ENCODE measurements at regions of chr20 and their contacts with region 1.

Region 1: DNA sequence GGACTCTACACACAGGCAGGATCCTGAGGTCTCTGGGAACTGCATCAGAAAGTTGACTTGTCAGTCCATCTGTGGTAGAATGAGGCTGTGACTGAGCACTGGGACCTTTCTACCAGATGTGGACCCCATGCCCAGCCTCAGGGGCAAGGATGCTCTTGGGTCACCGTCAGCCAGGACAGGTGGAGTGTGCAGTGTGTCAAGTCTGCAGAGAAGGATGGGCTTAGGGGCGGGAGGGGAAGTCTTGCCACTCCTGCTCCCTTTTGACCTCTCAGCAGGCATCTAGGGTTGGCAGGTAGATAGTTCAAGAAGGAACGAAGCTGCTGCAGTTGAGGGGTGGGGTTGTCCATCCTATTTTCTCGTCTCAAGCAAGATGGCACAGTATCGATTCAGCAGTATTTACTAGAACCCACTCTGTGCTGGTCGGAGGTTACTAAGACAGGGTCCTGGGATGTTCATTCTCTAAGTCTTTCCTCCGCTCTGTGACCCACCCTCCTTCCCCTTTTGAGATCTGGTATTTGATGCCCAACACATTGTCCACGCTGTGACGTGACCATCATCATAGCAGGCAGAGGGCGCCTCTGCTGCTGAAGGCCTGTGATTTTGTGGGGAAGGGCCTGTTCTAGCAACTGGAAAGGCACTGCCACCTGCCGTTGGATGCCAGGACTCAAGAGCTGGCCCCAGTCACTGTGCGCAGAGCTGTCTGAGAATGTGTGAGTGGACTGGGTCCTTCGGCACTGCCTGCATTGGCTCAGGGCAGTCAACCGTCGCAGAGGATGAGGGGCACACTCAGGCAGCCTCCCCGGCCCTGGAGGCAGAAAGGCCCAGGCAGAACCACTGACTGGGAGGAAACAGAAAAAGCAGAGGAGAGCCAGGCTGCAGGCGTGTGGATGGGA is 23.2 kb downstream of the RBCK1 start:
- DNase-seq: peak; percentile 92

Region 2: DNA sequence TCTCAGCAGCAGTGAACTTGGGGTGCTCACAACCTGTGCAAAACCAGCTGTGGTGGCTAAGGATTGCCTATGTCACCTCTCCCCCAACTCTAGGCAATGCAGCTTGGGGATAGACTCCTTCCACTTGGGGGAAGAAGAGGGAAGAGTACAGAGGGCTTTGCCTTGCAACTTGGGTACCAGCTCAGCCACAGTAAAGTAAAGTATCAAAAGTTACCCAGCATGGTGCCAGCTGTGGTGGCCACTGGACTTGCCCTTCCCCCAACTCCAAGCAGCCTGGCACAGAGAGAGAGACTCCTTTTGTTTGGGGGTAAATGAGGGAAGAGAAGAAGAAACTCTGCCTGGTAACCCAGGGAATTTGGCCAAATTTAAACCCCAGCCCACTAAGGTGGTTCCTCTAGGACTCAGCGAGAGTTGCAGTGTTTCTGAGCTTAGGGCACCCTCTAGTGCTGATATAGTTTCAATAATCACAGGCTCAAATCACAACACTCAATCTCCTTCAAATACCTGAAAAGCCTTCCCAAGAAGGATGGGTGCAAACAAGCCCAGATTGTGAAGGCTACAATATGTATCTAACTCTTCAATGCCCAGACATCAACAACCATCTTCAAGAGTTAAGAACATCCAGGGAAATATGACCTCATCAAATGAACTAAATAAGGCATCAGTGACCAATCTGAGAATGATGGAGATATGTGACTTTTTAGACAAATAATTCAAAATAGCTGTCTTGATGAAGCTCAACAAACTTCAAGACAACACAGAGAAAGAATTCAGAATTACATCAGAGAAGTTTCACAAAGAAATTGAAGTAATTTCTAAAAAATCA is 211.8 kb before region 1 on chr20:
- in situ Hi-C with region 1: no loop called
- DNase-seq: peak; percentile 37

Region 3: DNA sequence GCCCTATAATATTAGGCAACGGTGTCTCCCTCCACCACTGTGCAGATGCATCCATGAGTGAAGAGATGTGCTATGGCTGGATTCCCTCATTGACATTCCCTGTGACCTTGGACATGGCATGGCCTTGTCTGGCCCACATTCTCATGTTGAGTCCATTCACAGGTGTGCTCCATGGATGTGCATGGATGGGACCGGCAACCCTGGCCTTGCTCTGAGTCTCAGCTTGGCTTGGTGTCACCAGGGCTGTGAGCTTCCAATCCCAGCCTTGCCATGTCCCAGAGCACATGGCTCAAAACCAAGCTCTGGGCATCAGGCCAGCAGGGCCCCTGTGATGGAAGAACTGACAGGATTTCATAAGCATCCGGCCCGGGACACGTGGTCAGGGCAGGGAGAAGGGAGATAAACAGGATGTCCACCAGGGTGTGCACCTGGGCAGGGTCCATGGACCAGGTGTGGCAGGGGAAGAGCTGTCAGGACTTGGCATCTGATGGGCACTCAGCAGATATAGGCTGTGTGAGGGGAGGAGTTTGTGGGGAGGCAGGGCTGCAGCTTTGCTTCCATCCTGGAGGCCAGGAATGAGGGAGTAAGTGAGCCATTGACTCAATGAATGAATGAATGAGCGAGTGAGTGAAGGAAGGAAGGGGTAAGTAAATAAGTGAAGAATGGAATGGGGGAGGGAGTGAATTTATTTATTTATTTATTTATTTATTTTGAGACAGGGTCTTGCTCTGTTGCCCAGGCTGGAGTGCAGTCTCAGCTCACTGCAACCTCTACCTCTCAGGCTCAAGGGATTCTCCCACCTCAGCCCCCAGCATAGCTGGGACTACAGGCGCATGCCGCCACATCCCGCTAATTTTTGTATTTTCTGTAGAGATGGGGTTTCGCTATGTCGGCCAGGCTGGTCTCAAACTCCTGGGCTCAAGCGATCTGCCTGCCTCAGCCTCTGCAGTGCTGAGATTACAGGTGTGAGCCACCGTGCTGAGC is 68.7 kb before region 1 on chr20:
- in situ Hi-C with region 1: loop called (anchors 5 kb)
- DNase-seq: peak; percentile 89

Region 4: DNA sequence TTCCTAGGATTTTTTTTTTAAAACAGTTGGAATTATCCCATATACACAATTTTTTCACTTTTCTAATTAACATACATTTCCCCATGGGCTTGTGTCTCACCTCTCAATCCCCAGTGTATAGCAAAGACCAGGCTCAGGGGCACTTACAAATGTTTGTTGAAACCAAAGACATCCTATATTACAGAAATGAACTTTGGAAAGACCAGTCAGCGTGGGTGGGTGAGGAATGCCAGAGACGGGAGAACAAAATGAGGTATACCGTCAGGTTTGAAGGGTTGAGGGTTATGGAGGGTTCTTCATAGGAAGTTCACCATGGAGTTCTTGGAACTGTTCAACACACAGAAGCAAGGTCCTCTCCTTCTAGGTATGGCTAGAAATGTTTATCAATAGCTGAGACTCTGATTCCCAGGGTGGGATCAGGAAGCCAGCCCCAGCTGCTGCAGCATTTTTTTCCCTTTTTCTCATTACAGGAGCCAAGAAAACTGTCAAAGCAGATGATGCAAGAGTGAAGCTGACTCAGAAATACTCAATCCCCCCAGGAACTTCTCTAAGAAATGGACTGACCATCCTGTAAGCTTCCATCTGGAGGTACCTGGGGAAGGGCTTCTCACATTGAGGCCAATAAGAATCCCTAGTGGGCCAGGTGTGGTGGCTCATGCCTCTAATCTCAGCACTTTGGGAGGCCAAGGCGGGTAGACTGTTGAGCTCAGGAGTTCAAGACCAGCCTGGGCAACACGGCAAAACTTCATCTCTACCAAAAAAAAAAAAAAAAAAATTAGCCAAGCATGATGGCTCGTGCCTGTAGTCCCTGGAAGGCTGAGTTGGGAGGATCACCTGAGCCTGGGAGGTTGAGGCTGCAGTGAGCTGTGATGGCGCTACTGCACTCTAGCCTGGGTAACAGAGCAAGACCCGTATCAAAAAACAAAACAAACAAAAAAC is 47.0 kb after region 1 on chr20:
- in situ Hi-C with region 1: no loop called
- DNase-seq: no peak